Caco-2 (cell line): ENCODE measurements at regions of chr10 and their contacts with region 1.

Region 1: GRCh38 chr10:69914398-69915214 is 112.9 kb downstream of the COL13A1 start:
- DNase-seq: peak; percentile 80 to 86
- H3K4me3 ChIP-seq: no peak overlapping the region
- H3K4me3 Mint-ChIP-seq: no peak overlapping the region
- H3K27ac Mint-ChIP-seq: no peak overlapping the region
- H3K4me1 ChIP-seq: no peaks in the 10 kb centered on the region
- H3K4me1 Mint-ChIP-seq: no peaks in the 10 kb centered on the region
- H3K27me3 ChIP-seq: peaks cover 5% of the 10 kb centered on the region
- H3K27me3 Mint-ChIP-seq: peaks cover 9% of the 10 kb centered on the region
- CTCF ChIP-seq: peak; percentile 99

Region 2: DNA sequence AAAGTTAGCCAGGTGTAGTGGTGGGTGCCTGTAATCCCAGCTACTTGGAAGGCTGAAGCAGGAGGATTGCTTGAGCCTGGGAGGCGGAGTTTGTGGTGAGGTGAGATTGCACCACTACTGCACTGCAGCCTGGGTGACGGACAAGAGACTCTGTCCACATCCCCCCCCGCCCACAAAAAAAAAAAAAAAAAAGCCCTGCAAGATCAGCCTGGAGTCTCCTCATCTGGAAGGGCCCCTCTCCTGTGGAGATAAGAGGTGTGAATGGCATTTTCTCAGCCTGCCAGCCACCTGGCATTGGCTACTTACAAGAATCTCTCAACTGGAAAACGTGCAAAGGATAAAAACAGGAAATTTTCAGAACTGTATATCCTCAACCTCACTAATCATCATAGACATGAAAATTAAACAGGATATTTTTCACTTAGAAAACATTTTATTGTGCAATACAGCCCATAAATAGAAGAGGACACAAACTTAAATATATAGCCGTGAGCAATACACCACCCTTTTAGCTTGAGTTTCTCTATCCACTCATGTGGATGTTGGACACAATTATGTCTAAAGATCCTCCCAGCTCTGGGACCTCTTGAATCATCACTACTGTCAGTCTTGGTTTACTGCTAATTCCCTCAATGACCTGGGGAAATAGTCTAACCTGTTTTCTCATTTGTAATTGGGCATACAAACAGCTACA is 474.6 kb before region 1 on chr10:
- CTCF ChIA-PET with region 1: interaction called, 10 read pairs
- POLR2A ChIA-PET with region 1: no interaction called
- intact Hi-C with region 1: no loop called
- DNase-seq: peak; percentile 85 to 91
- H3K4me3 ChIP-seq: no peak overlapping the region
- H3K4me3 Mint-ChIP-seq: peak overlapping the region; percentile 56
- H3K27ac Mint-ChIP-seq: peak overlapping the region; percentile 86
- H3K4me1 ChIP-seq: peaks cover 36% of the 10 kb centered on the region
- H3K4me1 Mint-ChIP-seq: peaks cover 44% of the 10 kb centered on the region
- H3K27me3 ChIP-seq: no peaks in the 10 kb centered on the region
- H3K27me3 Mint-ChIP-seq: no peaks in the 10 kb centered on the region
- CTCF ChIP-seq: no peak

Region 3: GRCh38 chr10:69786791-69787190 is 127.8 kb before region 1 on chr10:
- CTCF ChIA-PET with region 1: interaction called, 18 read pairs
- POLR2A ChIA-PET with region 1: no interaction called
- intact Hi-C with region 1: loop called (anchors 2 kb)
- DNase-seq: no peak
- H3K4me3 ChIP-seq: no peak overlapping the region
- H3K4me3 Mint-ChIP-seq: no peak overlapping the region
- H3K27ac Mint-ChIP-seq: no peak overlapping the region
- H3K4me1 ChIP-seq: no peaks in the 10 kb centered on the region
- H3K4me1 Mint-ChIP-seq: no peaks in the 10 kb centered on the region
- H3K27me3 ChIP-seq: peaks cover 1% of the 10 kb centered on the region; the same call in 1 of the 2 replicates
- H3K27me3 Mint-ChIP-seq: peaks cover 8% of the 10 kb centered on the region
- CTCF ChIP-seq: no peak

Region 4: GRCh38 chr10:69885379-69886013 is 29.1 kb before region 1 on chr10:
- CTCF ChIA-PET with region 1: interaction called, 192 read pairs
- POLR2A ChIA-PET with region 1: no interaction called
- intact Hi-C with region 1: loop called (anchors 1 kb)
- DNase-seq: peak in 1 of 2 experiments; percentile 44
- H3K4me3 ChIP-seq: no peak overlapping the region
- H3K4me3 Mint-ChIP-seq: no peak overlapping the region
- H3K27ac Mint-ChIP-seq: no peak overlapping the region
- H3K4me1 ChIP-seq: no peaks in the 10 kb centered on the region
- H3K4me1 Mint-ChIP-seq: peaks cover 20% of the 10 kb centered on the region
- H3K27me3 ChIP-seq: no peaks in the 10 kb centered on the region
- H3K27me3 Mint-ChIP-seq: peaks cover 10% of the 10 kb centered on the region
- CTCF ChIP-seq: peak; percentile 61 to 76

Region 5: DNA sequence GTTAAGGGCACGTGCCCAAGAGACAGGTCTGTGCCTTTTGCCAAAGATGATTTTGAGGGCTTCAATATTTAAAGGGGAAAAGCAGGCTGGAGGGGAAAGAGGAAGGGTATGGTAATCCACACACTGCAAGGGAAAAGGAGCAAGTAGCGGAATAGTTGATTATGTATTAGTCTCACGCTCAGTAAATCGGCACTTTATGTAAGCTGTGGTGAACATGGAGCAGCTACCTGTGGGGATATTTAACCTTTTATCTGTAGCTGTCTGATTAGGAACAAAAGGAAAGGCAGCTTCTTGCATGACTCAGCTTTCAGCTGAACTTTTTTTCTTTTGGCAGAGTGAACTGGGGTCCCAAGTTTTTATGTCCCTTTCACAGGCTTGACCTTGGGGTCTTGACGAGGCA is 10.5 kb after region 1 on chr10:
- CTCF ChIA-PET with region 1: interaction called, 11 read pairs
- POLR2A ChIA-PET with region 1: no interaction called
- intact Hi-C with region 1: no loop called
- DNase-seq: no peak
- H3K4me3 ChIP-seq: no peak overlapping the region
- H3K4me3 Mint-ChIP-seq: no peak overlapping the region
- H3K27ac Mint-ChIP-seq: no peak overlapping the region
- H3K4me1 ChIP-seq: peaks cover 6% of the 10 kb centered on the region; the same call in 1 of the 2 replicates
- H3K4me1 Mint-ChIP-seq: no peaks in the 10 kb centered on the region
- H3K27me3 ChIP-seq: 0 out of 2 replicates have a peak, but pooled peaks cover 1% of the 10 kb centered on the region
- H3K27me3 Mint-ChIP-seq: peaks cover 8% of the 10 kb centered on the region
- CTCF ChIP-seq: no peak

Region 6: GRCh38 chr10:70363971-70364771 is 449.6 kb after region 1 on chr10:
- CTCF ChIA-PET with region 1: no interaction called
- POLR2A ChIA-PET with region 1: no interaction called
- intact Hi-C with region 1: no loop called
- DNase-seq: peak; percentile 94 to 97
- H3K4me3 ChIP-seq: no peak overlapping the region
- H3K4me3 Mint-ChIP-seq: no peak overlapping the region
- H3K27ac Mint-ChIP-seq: peak overlapping the region; percentile 33
- H3K4me1 ChIP-seq: peaks cover 16% of the 10 kb centered on the region
- H3K4me1 Mint-ChIP-seq: peaks cover 28% of the 10 kb centered on the region
- H3K27me3 ChIP-seq: no peaks in the 10 kb centered on the region
- H3K27me3 Mint-ChIP-seq: no peaks in the 10 kb centered on the region
- CTCF ChIP-seq: peak; percentile 98 to 99